Activated CD4-positive, alpha-beta T cell treated with anti-CD3 and anti-CD28 coated beads, Interleukin-2, amount 10 ng/mL, durations not matched to agents 24 days and 14 days (primary cell): ENCODE measurements at regions of chr10 and their contacts with region 1.

Region 1: GRCh38 chr10:7410862-7411670 is at the start of gene SFMBT2:
- DNase-seq: peak; percentile 90
- H3K4me3 Mint-ChIP-seq: peak within 1 kb of the TSS; percentile 95
- H3K27ac Mint-ChIP-seq: peak within 1 kb of the TSS; percentile 97
- H3K4me1 Mint-ChIP-seq: peaks cover 23% of the 10 kb centered on the region
- H3K27me3 Mint-ChIP-seq: peaks cover 30% of the 10 kb centered on the region
- total RNA-seq, gene SFMBT2: 24.9 TPM in 2 replicates

Region 2: GRCh38 chr10:6920072-6921019 is 490.7 kb before region 1 on chr10:
- intact Hi-C with region 1: loop called (anchors 2 kb)
- DNase-seq: peak; percentile 93
- H3K4me3 Mint-ChIP-seq: no peak overlapping the region
- H3K27ac Mint-ChIP-seq: no peak overlapping the region
- H3K4me1 Mint-ChIP-seq: peaks cover 22% of the 10 kb centered on the region
- H3K27me3 Mint-ChIP-seq: peaks cover 6% of the 10 kb centered on the region

Region 3: DNA sequence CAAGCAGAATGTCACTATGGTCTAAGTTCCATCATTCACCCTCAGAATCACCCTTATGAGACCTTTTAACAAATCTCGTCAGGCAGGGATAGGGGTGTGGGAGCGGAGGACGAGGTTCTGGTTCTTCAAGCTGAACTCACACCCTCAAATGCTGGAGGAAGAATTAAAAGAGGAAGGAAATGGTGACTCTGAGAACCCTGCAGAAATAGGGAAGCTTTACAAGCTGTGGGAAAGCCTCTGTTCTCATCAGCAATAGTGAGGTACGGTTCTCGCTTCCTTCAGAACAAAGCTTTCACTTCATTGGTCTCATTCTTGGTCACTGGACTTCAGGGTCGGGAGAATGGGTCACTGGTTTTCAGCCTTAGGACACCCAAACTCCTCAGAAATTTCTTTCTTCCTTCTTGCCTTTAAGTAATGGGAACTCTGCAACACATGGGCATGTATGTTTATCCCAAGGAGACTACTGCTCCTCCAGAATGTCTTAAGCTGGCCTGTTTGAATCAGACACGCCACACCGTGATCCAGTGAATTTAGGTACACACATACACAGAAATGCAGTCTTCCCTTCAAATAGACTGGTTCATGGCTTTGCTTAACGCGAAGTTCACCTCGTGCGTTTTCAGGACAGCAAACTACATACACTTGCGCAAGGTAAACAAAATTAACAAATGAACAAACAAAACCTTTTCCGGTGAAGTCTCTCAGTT is 226.3 kb before region 1 on chr10:
- intact Hi-C with region 1: loop called (anchors 2 kb)
- DNase-seq: no peak
- H3K4me3 Mint-ChIP-seq: peak overlapping the region; percentile 27
- H3K27ac Mint-ChIP-seq: peak overlapping the region; percentile 83
- H3K4me1 Mint-ChIP-seq: peaks cover 50% of the 10 kb centered on the region
- H3K27me3 Mint-ChIP-seq: no peaks in the 10 kb centered on the region

Region 4: GRCh38 chr10:7239312-7239985 is 171.6 kb before region 1 on chr10:
- intact Hi-C with region 1: loop called (anchors 1 kb)
- DNase-seq: peak; percentile 79
- H3K4me3 Mint-ChIP-seq: peak overlapping the region; percentile 14
- H3K27ac Mint-ChIP-seq: peak overlapping the region; percentile 46
- H3K4me1 Mint-ChIP-seq: peaks cover 50% of the 10 kb centered on the region
- H3K27me3 Mint-ChIP-seq: peaks cover 2% of the 10 kb centered on the region

Region 5: GRCh38 chr10:7269988-7270387 is 141.1 kb before region 1 on chr10:
- intact Hi-C with region 1: loop called (anchors 1 kb)
- DNase-seq: peak; percentile 64
- H3K4me3 Mint-ChIP-seq: peak overlapping the region; percentile 70
- H3K27ac Mint-ChIP-seq: peak overlapping the region; percentile 94
- H3K4me1 Mint-ChIP-seq: peaks cover 58% of the 10 kb centered on the region
- H3K27me3 Mint-ChIP-seq: peaks cover 2% of the 10 kb centered on the region

Region 6: DNA sequence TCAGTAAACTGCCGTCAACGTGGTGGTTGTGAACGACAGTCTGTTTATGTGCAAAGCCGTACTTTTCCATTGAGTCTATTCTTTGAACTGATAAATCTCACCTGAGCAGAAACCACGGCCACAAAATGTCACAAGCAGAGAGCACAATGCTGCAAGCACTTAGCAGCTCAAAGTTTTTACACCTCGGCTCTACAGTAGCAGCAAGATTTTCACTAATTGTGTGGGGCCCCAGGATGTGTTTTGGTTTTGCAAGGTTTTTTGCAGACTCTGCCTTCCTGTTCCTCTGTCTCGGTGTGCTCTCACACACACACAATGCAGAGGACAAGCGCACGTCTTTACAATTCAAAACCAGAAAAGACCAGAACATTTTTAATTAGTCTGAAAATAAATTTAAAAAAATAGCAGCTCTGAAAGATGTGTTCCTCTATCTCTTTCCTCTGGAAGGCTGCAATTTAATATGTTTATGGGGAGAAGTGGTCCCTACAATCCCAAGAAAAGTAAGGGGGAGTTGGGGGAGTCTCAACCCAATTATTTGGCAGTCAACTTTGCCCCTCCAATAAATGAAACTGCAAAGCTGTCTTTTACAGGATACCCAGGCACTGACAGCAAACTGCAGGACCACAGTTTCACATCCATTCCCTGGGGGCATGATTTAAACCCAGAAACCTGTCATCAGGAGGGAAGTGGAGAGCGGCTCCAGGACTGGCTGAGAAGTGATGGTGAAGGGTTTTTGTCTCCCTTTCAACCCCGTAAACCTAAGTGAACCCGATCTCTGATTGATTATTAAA is 73.6 kb after region 1 on chr10:
- intact Hi-C with region 1: loop called (anchors 1 kb)
- DNase-seq: peak; percentile 92
- H3K4me3 Mint-ChIP-seq: peak overlapping the region; percentile 69
- H3K27ac Mint-ChIP-seq: peak overlapping the region; percentile 79
- H3K4me1 Mint-ChIP-seq: peaks cover 67% of the 10 kb centered on the region
- H3K27me3 Mint-ChIP-seq: no peaks in the 10 kb centered on the region